ENCODE measurements at regions of chr22 and their contacts with region 1.

Region 1: DNA sequence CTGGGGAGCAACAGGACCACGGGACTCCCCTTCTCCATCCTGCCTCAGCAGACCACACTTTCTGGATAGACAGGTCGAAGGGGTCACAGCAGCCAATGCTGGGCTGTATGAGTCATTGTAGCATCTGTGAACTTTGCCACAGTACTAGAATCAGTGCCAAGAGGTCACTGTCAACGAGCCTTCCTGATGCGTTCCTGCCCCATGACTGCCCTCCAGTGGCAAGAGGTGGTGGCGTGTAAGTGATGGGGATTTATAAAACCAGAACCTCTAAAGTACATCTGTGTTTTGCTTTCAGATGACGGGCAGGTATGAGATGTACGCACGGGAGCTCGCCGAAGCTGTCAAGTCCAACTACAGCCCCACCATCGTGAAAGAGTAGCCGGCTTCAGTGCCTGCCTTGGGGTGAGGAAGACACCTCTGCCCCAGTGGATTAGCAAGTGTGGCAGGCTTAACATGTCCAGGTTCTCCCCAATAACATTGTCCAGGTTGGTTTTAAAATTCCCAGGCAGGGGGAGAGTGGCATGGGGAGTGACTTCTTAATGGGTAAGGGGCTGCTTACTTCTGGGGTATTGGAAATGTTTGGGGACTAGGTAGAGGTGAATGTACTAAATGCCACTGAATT is 29.4 kb downstream of the GUCD1 start:
- DNase-seq: peak; percentile 88
- ATAC-seq: peak; percentile 87

Region 2: DNA sequence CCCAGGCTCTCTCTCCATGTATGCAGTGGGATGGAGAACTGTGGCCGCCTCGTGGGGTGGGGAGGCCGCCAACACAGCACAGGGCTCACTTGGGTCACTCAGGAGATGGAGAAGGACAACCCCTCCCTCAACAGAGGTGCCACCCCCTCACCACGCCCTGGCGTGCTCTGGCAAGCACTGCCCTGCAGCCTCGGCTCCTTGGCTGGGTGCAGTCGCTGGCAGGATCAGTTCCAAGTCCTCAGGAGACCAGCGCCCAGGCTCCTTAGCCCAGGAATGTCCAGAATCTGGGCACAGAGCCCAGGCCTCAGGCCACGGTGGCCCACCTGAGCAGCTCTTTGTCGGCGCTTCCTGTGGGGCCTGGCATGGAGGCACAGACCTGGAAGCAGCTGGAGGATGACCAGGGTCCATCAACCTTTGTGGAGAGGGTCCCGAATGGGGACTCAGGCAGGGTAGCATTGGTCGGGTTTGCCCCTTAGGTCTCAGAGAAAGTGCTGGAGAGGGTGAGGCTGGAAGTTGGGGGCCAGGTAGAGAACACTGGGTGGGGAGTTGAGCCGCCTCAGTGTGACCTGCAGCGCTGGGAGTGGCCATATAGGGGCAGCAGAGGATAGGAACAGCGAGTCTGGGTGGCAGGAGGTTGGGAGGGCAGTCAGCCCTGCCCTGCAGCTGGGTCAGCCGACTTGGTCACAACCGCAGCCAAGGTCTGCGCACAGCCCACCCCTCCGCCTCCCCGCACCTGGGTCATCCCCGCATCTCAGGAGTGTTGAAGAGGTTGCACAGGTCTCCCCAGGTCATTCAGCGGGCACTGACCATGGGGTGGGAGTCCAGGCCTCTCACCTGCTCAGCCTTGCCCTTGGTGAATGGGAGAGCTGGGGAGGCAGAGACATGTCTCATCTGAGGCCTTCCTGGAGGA is 336.0 kb before region 1 on chr22:
- intact Hi-C with region 1: loop called (anchors 10 kb)
- DNase-seq: peak; percentile 83
- ATAC-seq: peak; percentile 94